AG04449 (cell line): ENCODE measurements at regions of chr6 and their contacts with region 1.

Region 1: DNA sequence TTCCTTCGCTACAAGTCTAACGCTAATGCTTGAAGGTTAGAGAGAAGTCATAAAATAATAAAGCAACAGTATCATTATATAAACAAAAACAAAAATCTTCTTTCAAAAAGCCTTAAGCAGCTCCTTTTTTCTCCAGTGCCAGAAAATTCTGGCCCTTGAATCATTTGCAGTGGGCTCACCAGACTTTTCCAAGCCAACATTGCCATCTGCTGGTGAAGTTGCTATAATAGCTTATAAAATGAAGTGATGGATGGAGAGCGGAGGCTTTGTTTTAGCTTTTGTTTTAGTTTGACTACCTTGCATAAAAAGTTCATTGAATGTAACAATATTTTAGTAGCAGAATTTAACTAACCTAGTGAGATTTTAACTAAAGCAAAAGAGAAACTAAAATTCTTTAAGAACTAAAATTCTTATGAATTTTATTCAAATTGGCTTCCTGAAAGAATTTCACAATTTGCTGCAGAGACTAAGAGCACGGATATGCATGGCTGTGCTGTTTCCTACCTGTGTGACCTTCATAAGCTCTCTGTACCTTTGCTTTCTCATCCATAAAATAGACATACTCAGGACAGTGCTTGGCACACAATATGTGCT is 44.8 kb upstream of the SLC2A12 start:
- DNase-seq: no peak
- H3K4me3 ChIP-seq: no peak overlapping the region
- CTCF ChIP-seq: peak; percentile 30

Region 2: GRCh38 chr6:133837801-133838349 is 259.3 kb before region 1 on chr6:
- CTCF ChIA-PET with region 1: interaction called, 20 read pairs
- POLR2A ChIA-PET with region 1: no interaction called
- DNase-seq: no peak
- H3K4me3 ChIP-seq: peak overlapping the region; percentile 50
- CTCF ChIP-seq: peak; percentile 63

Region 3: GRCh38 chr6:133923938-133924593 is 173.1 kb before region 1 on chr6:
- CTCF ChIA-PET with region 1: interaction called, 1,249 read pairs
- POLR2A ChIA-PET with region 1: interaction called, 3 read pairs
- DNase-seq: peak; percentile 33
- H3K4me3 ChIP-seq: no peak overlapping the region
- CTCF ChIP-seq: peak; percentile 68

Region 4: DNA sequence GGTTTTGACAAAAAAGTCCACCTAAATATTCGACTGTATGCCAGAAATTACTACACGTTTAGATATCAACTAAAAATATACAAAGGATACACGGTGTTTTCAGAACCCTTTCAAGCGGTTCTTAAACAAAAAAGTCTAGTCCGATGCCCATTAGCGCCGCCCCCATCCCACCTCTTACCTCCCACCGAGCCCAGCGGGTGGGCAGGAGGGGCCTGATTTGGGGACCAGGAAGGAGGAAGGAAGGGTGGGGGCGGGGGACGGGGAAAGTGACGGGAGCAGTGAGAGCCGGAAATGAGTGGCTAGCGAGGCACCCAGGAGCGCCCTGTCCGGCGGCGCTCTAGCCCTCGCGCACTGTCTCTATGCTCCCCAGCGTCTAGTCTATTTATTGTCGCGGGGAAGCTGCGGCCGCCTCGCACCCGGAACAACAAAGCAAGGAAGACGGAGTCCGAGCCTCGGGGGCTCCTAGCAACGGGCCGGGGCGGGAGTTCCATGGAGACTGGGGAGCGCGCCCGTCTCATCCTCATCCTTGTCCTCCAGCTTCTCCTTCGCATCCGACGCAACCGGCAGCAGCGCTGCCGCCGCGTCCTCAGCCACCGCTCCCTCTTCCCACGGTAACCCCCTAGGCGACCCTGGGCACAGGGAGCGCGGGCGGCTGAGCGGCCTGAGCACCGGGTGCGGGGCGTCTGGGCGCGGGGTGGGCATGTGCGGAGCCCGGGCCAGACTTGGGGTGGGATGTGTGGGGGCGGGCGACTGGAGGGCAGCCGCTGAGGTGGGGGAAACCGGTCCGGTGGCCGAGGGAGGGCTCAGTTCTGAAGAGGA is 144.2 kb before region 1 on chr6 and contains the start of gene TBPL1:
- CTCF ChIA-PET with region 1: interaction called, 33 read pairs
- POLR2A ChIA-PET with region 1: no interaction called
- DNase-seq: peak; percentile 69
- H3K4me3 ChIP-seq: peak within 1 kb of the TSS; percentile 82
- CTCF ChIP-seq: no peak

Region 5: GRCh38 chr6:133973109-133973971 is 123.9 kb before region 1 on chr6:
- CTCF ChIA-PET with region 1: interaction called, 110 read pairs
- POLR2A ChIA-PET with region 1: no interaction called
- DNase-seq: no peak
- H3K4me3 ChIP-seq: no peak overlapping the region
- CTCF ChIP-seq: no peak

Region 6: DNA sequence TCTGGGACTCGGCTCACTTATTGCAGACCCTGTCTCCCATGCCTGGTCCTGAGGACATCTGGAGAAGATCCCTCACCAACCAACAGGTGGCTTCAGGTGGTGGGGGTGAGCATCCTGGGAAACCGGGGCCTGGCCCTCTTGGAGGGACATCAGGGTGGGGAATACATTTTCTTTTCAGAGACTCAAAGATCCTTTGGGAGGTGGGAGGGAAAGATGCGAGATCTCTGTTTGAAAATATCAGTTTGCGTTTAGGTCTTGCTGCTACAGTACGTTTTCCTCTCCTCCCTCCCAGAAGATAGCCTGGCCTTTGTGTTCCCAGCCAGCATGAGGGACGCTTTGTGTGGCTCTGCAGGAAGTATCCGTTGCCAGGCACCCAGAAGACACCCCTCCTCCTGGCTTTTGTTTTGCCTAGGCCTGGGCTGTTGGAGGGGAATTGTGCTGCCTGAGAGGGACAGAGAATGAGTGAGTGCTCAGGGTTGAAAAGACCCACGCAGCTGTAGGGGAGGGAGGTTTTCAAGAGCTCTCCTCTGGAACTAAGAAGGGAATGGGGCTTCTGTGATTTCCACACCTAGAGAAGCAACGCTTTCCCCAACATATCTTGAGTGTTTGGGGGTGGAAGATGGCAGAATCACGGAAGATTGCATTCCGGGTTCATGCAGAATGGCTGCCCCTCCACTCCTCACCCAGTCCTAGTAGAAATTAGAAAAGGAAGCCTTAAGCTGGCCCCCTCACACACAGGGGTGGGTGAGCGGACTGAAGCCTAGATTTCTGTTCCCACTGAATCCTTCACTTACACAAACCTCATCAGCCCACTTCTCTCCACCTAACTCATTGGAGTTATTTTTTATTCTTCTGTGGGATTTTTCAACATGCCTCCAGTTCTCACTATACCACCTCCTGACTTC is 22.8 kb before region 1 on chr6:
- CTCF ChIA-PET with region 1: interaction called, 11 read pairs
- POLR2A ChIA-PET with region 1: no interaction called
- DNase-seq: no peak
- H3K4me3 ChIP-seq: no peak overlapping the region
- CTCF ChIP-seq: no peak

Region 7: DNA sequence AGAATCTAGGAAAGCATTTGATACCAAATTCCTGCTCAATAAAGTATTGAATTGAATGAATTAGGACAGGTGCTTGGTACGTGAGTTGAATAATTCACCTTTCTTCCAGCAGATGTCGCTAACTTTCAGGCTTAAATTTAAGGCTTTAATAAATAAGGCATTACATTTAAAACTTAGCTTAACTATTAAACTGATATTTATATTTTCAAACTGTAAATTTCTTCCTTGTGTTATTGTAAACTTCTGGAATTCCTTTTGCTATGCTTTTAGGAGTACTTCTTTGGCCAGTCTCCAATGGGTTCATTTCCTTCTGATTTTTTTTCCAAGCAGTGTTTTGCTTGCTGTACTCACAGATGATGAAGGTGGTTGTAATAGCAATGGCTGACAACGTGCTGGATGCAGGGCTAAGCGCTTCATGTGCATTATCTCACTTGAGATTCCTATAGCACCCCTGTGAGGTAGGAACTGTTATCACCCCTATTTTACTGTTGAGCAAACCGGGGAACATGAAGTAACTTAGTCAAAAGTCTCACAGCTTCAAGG is 26.5 kb after region 1 on chr6:
- CTCF ChIA-PET with region 1: interaction called, 20 read pairs
- POLR2A ChIA-PET with region 1: no interaction called
- DNase-seq: no peak
- H3K4me3 ChIP-seq: no peak overlapping the region
- CTCF ChIP-seq: peak; percentile 45

Region 8: GRCh38 chr6:134502614-134503549 is 405.7 kb after region 1 on chr6:
- CTCF ChIA-PET with region 1: no interaction called
- POLR2A ChIA-PET with region 1: no interaction called
- DNase-seq: no peak
- H3K4me3 ChIP-seq: no peak overlapping the region
- CTCF ChIP-seq: no peak